ENCODE measurements at regions of chr22 and their contacts with region 1.

Region 1: GRCh38 chr22:29245637-29246385 is 22.0 kb downstream of the RHBDD3 start:
- DNase-seq: peak; percentile 81 to 90
- H3K4me3 ChIP-seq: no peak overlapping the region
- H3K27ac ChIP-seq: no peak overlapping the region
- H3K4me1 ChIP-seq: peaks cover 0 to 5% (median 0%) of the 10 kb centered on the region in 4 donors
- H3K27me3 ChIP-seq: no peaks in the 10 kb centered on the region
- CTCF ChIP-seq: peak in 5 of 7 experiments; percentile 90 to 98 (median 97)
- EP300 ChIP-seq: no peak
- POLR2A ChIP-seq: no peak

Region 2: DNA sequence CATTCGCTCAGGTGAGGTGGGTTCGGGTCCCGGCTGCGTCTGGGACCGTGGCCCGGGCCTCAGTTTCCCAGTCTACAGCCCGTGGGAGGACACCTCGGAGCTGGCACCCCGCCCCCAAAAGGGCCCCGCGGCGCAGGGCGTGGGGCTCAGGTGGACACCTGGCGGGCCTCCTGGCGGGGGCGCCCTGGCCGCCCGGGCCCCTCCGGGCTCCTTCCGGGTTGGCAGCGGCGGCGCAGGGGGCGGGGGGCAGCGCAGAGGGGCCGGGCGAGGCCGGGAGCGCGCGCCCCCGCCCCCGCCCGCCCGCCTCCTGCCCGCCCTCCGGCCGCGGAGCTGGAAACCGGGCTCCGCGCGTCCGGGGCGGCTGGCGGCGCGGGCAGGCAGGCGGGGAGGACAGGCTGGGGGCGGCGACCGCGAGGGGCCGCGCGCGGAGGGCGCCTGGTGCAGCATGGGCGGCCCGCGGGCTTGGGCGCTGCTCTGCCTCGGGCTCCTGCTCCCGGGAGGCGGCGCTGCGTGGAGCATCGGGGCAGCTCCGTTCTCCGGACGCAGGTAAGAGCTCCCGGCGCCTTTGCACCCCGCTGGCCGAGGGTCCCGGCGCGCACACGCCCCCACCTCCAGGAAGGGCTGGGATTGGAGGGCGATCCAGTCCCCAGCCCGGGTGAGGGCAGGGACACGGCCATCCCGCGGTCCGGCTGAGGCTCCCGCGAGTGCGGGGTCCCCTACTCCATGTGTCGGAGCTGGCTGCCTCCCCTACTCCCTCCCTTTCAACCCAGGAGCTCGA is 40.0 kb before region 1 on chr22 and contains the start of gene EMID1:
- intact Hi-C with region 1: loop called (anchors 5 kb)
- DNase-seq: peak; percentile 61 to 85
- H3K4me3 ChIP-seq: peak within 1 kb of the TSS; percentile 55 to 71 (median 61)
- H3K27ac ChIP-seq: peak within 1 kb of the TSS in 4 of 5 donors; percentile 24 to 70 (median 52)
- H3K4me1 ChIP-seq: peaks cover 22 to 59% (median 39%) of the 10 kb centered on the region in 4 donors
- H3K27me3 ChIP-seq: peaks cover 0 to 17% (median 0%) of the 10 kb centered on the region in 3 donors
- CTCF ChIP-seq: peak in 1 of 7 experiments; percentile 25
- EP300 ChIP-seq: no peak
- POLR2A ChIP-seq: no peak
- total RNA-seq, gene EMID1: 1.8 to 23.6 (median 9.5) TPM in 4 of 5 donors, not detected in the other

Region 3: DNA sequence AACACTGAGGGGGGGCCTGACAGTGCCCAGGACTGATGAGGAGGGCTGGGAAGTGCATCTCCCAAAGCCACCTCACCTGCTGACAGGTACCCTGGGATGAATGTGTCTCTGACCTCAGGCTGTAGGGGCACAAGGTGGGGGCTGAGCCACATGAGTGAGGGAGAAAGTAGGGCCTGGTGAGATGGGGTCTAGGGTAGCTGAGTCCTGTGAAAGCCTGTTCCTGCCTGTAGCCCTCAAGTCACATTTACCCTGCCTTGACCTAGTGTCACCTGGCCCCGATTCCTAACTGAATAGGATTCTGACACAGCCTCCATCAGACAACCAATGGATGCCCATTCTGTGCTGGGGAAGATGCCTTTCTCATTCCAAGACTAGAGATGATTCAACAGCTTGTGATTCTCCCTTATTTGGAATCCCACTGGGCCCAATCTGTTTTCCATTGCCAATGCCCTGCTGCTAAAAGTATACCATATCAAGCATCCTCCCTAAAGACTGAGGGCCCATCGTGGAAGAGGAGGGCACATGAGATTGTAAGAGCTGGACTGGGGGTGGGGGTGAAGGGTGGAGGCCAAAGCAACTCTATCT is 181.5 kb after region 1 on chr22:
- intact Hi-C with region 1: no loop called
- DNase-seq: no peak
- H3K4me3 ChIP-seq: no peak overlapping the region
- H3K27ac ChIP-seq: no peak overlapping the region
- H3K4me1 ChIP-seq: no peaks in the 10 kb centered on the region
- H3K27me3 ChIP-seq: peaks cover 0 to 21% (median 4%) of the 10 kb centered on the region in 3 donors
- CTCF ChIP-seq: no peak
- EP300 ChIP-seq: no peak
- POLR2A ChIP-seq: no peak